Activated naive CD4-positive, alpha-beta T cell treated with anti-CD3 and anti-CD28 coated beads for 36 hours (primary cell): ENCODE measurements at regions of chr19 and their contacts with region 1.

Region 1: GRCh38 chr19:1189419-1189818 is 15.4 kb upstream of the SBNO2 start:
- DNase-seq: peak; percentile 87
- H3K4me3 Mint-ChIP-seq: no peak overlapping the region
- H3K27ac Mint-ChIP-seq: peak overlapping the region; percentile 63
- H3K4me1 Mint-ChIP-seq: peaks cover 30% of the 10 kb centered on the region
- H3K27me3 Mint-ChIP-seq: no peaks in the 10 kb centered on the region

Region 2: DNA sequence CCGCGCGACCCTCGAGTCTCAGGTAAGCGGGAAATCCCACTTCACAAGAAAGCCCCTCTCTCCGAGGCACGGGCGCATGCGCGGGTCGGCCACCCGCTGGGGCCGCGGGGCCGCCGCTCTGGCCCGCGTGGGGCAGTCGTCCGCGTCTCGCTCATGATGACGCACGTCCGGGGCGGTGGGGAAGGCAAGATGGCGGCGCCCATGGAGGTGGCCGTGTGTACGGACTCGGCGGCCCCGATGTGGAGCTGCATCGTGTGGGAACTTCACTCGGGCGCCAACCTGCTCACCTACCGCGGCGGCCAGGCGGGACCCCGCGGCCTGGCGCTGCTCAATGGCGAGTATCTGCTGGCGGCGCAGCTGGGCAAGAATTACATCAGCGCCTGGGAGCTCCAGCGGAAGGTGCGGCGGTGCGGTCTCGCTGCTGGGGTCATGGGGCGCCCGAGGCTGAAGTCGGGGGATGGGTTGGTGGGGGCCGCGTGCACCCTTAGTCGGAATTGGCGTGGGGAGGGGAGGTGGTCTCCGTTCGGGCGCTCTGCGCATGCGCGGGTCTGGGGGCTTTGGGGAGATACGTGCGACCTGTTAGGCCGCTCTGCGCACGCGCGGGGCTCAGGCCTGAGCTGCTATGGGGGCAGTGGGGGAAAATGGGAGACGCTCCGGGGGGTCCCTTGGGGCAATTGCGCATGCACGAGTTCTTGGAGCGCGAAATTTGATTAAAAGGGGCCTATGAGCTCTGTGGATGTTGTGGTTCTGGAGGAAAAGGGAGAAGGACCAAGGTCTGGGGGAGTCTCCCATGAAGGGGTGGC is 205.1 kb before region 1 on chr19 and contains the start of gene WDR18:
- CTCF ChIA-PET with region 1: interaction called, 10 read pairs
- intact Hi-C with region 1: loop called (anchors 5 kb)
- DNase-seq: peak; percentile 94
- H3K4me3 Mint-ChIP-seq: peak within 1 kb of the TSS; percentile 92
- H3K27ac Mint-ChIP-seq: peak within 1 kb of the TSS; percentile 91
- H3K4me1 Mint-ChIP-seq: peaks cover 21% of the 10 kb centered on the region
- H3K27me3 Mint-ChIP-seq: no peaks in the 10 kb centered on the region
- total RNA-seq, gene WDR18: 77.8 to 82.0 TPM

Region 3: DNA sequence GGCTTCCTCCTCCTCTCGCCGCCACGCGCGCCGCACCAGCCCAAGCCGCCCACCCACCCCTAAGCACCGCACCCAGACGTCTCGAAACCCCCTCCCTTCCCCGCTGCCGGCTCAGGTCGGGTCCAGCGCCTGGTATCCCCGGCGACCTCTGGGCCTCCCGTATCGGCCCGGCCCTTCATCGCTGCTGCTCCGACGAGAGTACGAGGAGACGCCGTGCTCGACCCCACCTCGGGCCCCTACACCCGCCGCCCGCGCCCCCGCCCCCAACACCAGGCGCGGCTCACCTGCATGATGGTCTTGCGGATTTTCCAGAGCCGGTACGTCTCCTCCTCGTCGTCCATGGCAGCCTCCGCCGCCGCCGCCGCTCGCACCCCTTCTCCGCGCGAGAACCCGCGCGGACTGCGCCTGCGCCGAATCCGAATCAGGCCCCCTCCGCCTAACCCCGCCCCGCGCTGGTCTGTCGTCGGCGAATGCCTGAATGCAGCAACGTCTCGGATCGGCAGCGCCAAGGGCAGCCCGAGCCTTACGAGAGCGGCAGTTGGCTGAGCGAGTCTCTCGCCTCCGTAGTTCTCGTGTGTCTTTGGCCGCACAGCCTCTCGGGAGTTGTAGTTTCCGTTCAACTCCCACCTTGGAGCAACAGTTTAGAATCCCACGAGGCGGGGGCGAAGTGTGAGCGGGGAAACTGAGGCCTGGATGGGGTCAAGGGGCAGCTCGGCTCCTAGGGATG is 94.3 kb before region 1 on chr19 and contains the start of gene POLR2E:
- CTCF ChIA-PET with region 1: interaction called, 3 read pairs
- intact Hi-C with region 1: loop called (anchors 5 kb)
- DNase-seq: peak; percentile 99
- H3K4me3 Mint-ChIP-seq: peak within 1 kb of the TSS; percentile 92
- H3K27ac Mint-ChIP-seq: peak within 1 kb of the TSS; percentile 92
- H3K4me1 Mint-ChIP-seq: peaks cover 65% of the 10 kb centered on the region
- H3K27me3 Mint-ChIP-seq: no peaks in the 10 kb centered on the region
- total RNA-seq, gene POLR2E: 238 to 258 TPM

Region 4: DNA sequence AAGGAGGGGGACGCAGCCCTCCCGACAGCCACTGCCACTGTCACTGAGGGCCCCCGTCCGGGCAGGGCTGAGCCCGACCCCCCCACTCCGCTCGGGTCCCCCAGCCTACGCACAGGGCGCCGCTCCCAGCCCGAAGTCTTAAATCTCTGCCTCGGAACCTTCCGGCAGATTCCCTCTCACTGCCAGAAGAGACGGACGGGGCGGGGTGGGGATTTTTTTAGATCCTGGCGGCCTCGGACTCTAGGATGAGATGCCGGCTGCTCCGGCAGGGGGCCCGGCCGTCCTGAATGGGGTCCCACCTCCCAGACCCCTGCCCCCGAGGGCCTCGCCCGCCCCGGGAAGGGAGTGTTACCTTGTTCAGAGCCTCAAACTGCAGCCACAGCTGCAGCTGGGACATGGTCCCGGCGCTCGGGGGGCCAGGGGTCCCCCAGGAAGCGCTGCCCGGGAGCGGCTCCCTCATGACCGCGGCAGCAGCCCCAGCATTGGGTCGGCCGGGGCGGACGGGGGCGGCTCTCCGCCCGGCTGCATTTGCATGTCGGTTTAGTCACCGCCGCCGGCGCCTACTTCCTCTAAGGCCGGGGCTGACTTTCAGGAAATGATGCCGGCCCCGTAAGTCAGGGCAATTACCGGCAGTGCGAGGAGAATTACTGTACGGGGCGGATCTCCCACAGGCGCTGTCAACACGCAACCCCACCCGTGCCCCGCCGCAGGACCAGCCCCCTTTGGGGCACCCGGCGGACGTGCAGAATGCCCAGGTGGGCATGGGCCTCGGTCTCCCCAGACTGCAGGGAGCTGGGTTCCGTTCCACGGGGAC is 57.5 kb before region 1 on chr19:
- CTCF ChIA-PET with region 1: interaction called, 4 read pairs
- intact Hi-C with region 1: loop called (anchors 1 kb)
- DNase-seq: peak; percentile 97
- H3K4me3 Mint-ChIP-seq: peak overlapping the region; percentile 95
- H3K27ac Mint-ChIP-seq: peak overlapping the region; percentile 97
- H3K4me1 Mint-ChIP-seq: peaks cover 48% of the 10 kb centered on the region
- H3K27me3 Mint-ChIP-seq: no peaks in the 10 kb centered on the region

Region 5: DNA sequence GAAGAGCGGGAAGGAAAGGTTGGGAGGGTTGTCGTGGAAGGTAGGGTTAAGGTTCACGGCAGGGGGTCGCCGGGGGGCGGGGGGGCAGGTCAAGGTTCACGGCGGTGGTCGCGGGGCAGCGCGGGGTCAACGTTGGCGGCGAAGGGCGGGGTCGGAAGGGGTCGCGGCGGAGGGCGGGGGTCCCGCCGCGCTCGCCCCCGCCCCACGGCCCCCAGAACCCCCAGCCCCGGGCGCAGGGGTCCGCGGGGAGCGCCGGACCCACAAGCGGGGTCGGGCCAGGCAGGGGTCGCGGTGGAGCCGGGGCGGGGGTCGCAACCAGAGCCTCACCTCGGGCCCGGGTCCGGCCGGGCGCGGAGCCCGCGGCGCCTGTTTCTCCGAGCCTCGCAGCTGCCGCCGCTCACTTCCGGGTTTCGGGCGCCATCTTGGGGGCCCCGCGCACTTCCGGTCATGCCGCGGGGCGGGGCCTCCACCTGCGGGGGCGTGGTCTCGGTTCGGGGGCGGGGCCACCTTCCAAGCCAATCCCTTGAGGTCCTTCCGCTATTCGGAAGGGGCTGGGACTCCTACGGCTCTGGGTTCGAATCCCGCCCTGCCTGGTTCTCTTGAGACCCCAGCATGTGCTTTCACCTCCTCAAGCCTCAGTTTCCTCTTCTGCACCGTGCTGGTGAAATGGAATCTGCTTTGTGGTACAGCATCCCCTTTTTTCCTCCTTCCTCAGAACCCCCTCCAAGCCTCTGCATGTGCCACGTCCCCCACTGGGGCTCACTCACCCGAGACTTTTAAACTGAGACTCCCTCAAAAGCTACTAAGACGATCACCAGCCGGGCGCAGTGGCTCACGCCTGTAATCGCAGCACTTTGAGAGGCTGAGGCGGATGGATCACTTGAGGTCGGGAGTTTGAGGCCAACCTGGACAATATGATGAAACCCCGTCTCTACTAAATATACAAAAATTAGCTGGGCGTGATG is 15.3 kb before region 1 on chr19 and contains the start of gene SBNO2:
- CTCF ChIA-PET with region 1: interaction called, 4 read pairs
- intact Hi-C with region 1: loop called (anchors 1 kb)
- DNase-seq: peak; percentile 96
- H3K4me3 Mint-ChIP-seq: peak within 1 kb of the TSS; percentile 87
- H3K27ac Mint-ChIP-seq: peak within 1 kb of the TSS; percentile 89
- H3K4me1 Mint-ChIP-seq: peaks cover 38% of the 10 kb centered on the region
- H3K27me3 Mint-ChIP-seq: no peaks in the 10 kb centered on the region
- total RNA-seq, gene SBNO2: 112 to 117 TPM

Region 6: DNA sequence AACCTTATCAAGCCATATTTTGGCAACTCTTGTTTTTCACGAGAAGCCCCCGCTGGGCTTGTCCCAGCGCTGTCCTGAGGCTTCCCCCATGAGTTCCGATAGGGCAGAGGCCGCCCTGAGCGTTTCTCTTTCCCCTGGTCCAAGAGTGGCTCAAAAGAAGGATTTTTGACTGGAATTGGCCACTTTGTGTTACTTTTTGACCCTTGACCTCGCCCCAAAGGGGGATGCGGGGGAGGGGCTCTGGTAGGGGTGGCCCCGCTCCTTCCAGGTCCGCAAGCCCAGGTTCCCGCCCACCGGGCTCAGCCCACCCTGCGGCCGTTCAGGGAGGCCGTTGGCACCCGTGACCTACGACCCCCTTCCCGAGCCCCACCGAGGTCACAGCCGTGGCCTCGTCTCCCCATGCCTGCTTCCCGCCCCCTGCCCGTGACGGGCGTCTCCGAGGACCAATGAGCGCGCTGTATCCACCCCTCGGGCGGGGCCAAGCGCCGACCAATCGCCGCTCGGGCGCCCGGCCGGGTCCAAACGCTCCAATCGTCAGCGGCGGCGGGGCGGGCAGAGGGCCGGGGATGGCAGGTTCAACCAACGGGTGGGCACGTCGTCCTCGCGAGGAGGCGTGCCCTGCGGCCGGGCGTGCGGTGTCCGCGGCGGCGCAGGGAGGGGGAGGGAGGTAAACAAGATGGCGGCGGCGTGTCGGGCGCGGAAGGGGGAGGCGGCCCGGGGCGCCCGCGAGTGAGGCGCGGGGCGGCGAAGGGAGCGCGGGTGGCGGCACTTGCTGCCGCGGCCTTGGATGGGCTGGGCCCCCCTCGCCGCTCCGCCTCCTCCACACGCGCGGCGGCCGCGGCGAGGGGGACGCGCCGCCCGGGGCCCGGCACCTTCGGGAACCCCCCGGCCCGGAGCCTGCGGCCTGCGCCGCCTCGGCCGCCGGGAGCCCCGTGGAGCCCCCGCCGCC is 16.0 kb after region 1 on chr19 and contains the start of gene STK11:
- CTCF ChIA-PET with region 1: interaction called, 8 read pairs
- intact Hi-C with region 1: loop called (anchors 1 kb)
- DNase-seq: peak; percentile 99
- H3K4me3 Mint-ChIP-seq: peak within 1 kb of the TSS; percentile 93
- H3K27ac Mint-ChIP-seq: peak within 1 kb of the TSS; percentile 84
- H3K4me1 Mint-ChIP-seq: peaks cover 32% of the 10 kb centered on the region
- H3K27me3 Mint-ChIP-seq: no peaks in the 10 kb centered on the region
- total RNA-seq, gene STK11: 65.1 to 66.1 TPM